Transverse colon (tissue), 4 donors: ENCODE measurements at regions of chr12 and their contacts with region 1.

Region 1: GRCh38 chr12:29317556-29318363 is 63.2 kb downstream of the ERGIC2 start:
- DNase-seq: peak; percentile 55
- H3K4me3 ChIP-seq: no peak overlapping the region
- H3K27ac ChIP-seq: no peak overlapping the region
- H3K4me1 ChIP-seq: peaks cover 0 to 9% (median 0%) of the 10 kb centered on the region in 4 donors
- H3K27me3 ChIP-seq: no peaks in the 10 kb centered on the region
- CTCF ChIP-seq: peak; percentile 67 to 95 (median 75)
- EP300 ChIP-seq: no peak
- POLR2A ChIP-seq: no peak

Region 2: GRCh38 chr12:29066011-29066588 is 251.7 kb before region 1 on chr12:
- in situ Hi-C with region 1: loop called in 2 of 4 experiments (anchors 10 kb)
- intact Hi-C with region 1: loop called (anchors 10 kb)
- DNase-seq: no peak
- H3K4me3 ChIP-seq: no peak overlapping the region
- H3K27ac ChIP-seq: no peak overlapping the region
- H3K4me1 ChIP-seq: no peaks in the 10 kb centered on the region
- H3K27me3 ChIP-seq: no peaks in the 10 kb centered on the region
- CTCF ChIP-seq: no peak
- EP300 ChIP-seq: no peak
- POLR2A ChIP-seq: no peak

Region 3: GRCh38 chr12:29073628-29074239 is 244.0 kb before region 1 on chr12:
- in situ Hi-C with region 1: loop called in 3 of 4 experiments (anchors 5 to 10 kb)
- intact Hi-C with region 1: loop called (anchors 10 kb)
- DNase-seq: no peak
- H3K4me3 ChIP-seq: no peak overlapping the region
- H3K27ac ChIP-seq: no peak overlapping the region
- H3K4me1 ChIP-seq: no peaks in the 10 kb centered on the region
- H3K27me3 ChIP-seq: no peaks in the 10 kb centered on the region
- CTCF ChIP-seq: peak; percentile 68 to 79 (median 75)
- EP300 ChIP-seq: no peak
- POLR2A ChIP-seq: no peak

Region 4: GRCh38 chr12:29278673-29279420 is 38.9 kb before region 1 on chr12:
- in situ Hi-C with region 1: no loop called
- intact Hi-C with region 1: no loop called
- DNase-seq: no peak
- H3K4me3 ChIP-seq: no peak overlapping the region
- H3K27ac ChIP-seq: no peak overlapping the region
- H3K4me1 ChIP-seq: peaks cover 0 to 4% (median 0%) of the 10 kb centered on the region in 4 donors
- H3K27me3 ChIP-seq: no peaks in the 10 kb centered on the region
- CTCF ChIP-seq: no peak
- EP300 ChIP-seq: no peak
- POLR2A ChIP-seq: no peak